ENCODE measurements at regions of chr7 and their contacts with region 1.

Region 1: DNA sequence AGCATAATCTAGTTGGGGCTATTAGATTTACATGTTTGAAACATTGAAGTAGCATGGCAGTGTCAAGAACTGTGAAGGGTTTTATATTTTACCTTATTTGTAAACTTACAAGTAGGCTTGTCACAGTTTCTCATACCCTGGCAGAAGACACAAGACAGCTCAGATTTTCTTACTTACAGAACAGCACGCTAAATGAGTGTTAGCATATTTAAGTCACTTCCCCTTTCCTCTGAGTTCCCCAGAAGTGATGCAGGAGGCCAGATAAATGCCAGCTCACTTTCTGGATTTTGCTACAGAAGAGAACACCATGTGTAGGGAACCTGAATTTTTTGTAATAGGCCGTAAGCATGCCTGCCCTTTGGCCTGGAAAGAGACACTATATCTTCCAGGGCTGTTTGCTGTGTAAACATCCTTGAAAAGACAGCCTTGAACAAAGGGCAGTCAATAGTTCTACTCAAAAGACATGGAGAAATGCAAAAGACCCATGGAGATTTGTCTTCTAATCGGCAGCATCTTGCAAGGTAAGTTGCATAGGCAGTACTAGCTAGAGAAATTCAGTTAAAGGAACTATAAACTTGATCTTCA is 279.1 kb downstream of the PHF14 start:
- DNase-seq: peak; percentile 43 to 46
- H3K4me3 ChIP-seq: no peak overlapping the region
- H3K4me3 Mint-ChIP-seq: no peak overlapping the region
- H3K27ac Mint-ChIP-seq: peak overlapping the region; percentile 17
- H3K4me1 ChIP-seq: peaks cover 21% of the 10 kb centered on the region
- H3K4me1 Mint-ChIP-seq: peaks cover 18% of the 10 kb centered on the region
- H3K27me3 ChIP-seq: no peaks in the 10 kb centered on the region
- H3K27me3 Mint-ChIP-seq: peaks cover 2% of the 10 kb centered on the region
- CTCF ChIP-seq: no peak

Region 2: DNA sequence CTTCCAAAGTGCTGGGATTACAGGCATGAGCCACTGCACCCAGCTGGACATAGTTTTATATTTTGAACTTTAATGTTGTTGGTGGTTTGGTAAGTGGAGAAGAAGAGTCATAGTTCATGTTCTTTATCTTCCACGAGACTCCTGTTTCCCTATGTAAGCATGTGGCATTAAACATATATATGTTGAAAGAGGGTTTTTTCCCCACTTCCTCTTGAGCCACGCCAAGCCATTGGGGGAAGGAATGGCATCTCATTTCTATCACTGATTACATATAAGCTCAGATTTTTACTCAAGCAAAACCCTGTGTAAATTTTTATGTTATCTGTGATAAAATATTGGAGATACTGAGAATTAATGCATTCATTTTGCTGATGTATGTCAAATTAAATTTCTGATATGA is 21.3 kb after region 1 on chr7:
- CTCF ChIA-PET with region 1: no interaction called
- POLR2A ChIA-PET with region 1: no interaction called
- intact Hi-C with region 1: loop called (anchors 2 kb)
- DNase-seq: no peak
- H3K4me3 ChIP-seq: no peak overlapping the region
- H3K4me3 Mint-ChIP-seq: no peak overlapping the region
- H3K27ac Mint-ChIP-seq: no peak overlapping the region
- H3K4me1 ChIP-seq: no peaks in the 10 kb centered on the region
- H3K4me1 Mint-ChIP-seq: no peaks in the 10 kb centered on the region
- H3K27me3 ChIP-seq: no peaks in the 10 kb centered on the region
- H3K27me3 Mint-ChIP-seq: no peaks in the 10 kb centered on the region
- CTCF ChIP-seq: no peak

Region 3: DNA sequence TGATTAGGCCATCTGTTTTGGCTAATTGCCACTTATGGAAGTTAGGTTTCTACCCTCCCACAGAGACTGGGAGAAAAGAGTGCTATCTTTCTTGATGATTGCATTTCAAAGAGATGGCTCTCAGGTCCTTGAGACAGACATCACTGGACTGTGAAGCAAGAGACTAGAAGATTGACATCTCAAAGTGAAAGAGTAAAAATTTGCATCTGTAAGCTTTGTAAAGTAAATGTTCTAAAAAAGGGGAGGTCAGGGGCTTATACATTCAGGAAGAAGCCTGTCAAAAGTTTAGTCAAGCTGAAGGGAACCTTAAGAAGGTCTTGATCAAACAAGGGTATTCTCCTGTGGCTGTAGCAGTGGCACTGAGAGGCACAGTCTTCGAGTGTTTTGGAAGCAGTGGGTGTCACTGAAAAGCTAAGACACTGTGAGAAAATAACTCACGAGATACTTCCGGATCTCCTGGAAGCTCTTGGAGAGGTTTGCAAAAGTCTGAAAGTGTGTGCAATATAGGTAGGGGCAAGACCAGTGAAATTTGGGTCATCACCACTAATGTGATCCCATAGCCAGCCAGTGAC is 63.0 kb after region 1 on chr7:
- CTCF ChIA-PET with region 1: no interaction called
- POLR2A ChIA-PET with region 1: no interaction called
- intact Hi-C with region 1: no loop called
- DNase-seq: no peak
- H3K4me3 ChIP-seq: no peak overlapping the region
- H3K4me3 Mint-ChIP-seq: no peak overlapping the region
- H3K27ac Mint-ChIP-seq: no peak overlapping the region
- H3K4me1 ChIP-seq: no peaks in the 10 kb centered on the region
- H3K4me1 Mint-ChIP-seq: no peaks in the 10 kb centered on the region
- H3K27me3 ChIP-seq: no peaks in the 10 kb centered on the region
- H3K27me3 Mint-ChIP-seq: peaks cover 2% of the 10 kb centered on the region
- CTCF ChIP-seq: no peak